ENCODE measurements at regions of chrX and their contacts with region 1.

Region 1: GRCh38 chrX:47078129-47079043 is at the start of gene RGN:
- DNase-seq: peak; percentile 58 to 69
- H3K4me3 ChIP-seq: peak within 1 kb of the TSS; percentile 48
- H3K4me3 Mint-ChIP-seq: peak within 1 kb of the TSS; percentile 69
- H3K27ac Mint-ChIP-seq: peak within 1 kb of the TSS; percentile 22
- H3K4me1 ChIP-seq: peaks cover 24% of the 10 kb centered on the region
- H3K4me1 Mint-ChIP-seq: peaks cover 7% of the 10 kb centered on the region
- H3K27me3 ChIP-seq: no peaks in the 10 kb centered on the region
- H3K27me3 Mint-ChIP-seq: no peaks in the 10 kb centered on the region
- CTCF ChIP-seq: no peak
- total RNA-seq, gene RGN: 32.9 and 36.2 TPM in 2 replicates

Region 2: DNA sequence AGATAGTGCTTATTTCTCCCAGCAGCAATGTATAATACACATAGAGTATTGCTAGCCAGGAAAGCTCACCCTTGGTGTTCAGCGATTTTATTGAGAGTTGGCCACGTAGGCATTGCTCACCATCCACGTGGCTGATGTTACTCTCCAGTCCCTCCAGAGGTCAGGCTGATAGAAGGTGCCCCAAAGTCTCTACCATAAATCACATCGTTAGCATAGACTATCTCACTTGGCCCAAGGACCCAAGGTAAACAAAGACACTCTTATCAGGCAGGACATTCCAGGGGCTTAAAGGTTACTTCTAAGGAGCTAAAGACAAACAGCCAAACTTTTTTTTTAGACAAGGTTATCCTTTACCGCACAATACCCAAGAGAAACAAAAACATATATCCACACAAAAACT is 30.4 kb before region 1 on chrX:
- CTCF ChIA-PET with region 1: no interaction called
- POLR2A ChIA-PET with region 1: interaction called, 4 read pairs
- intact Hi-C with region 1: loop called (anchors 1 kb)
- DNase-seq: peak; percentile 74 to 82
- H3K4me3 ChIP-seq: no peak overlapping the region
- H3K4me3 Mint-ChIP-seq: peak overlapping the region; percentile 43
- H3K27ac Mint-ChIP-seq: no peak overlapping the region
- H3K4me1 ChIP-seq: peaks cover 11% of the 10 kb centered on the region
- H3K4me1 Mint-ChIP-seq: peaks cover 8% of the 10 kb centered on the region
- H3K27me3 ChIP-seq: no peaks in the 10 kb centered on the region
- H3K27me3 Mint-ChIP-seq: no peaks in the 10 kb centered on the region
- CTCF ChIP-seq: peak in 1 of 2 experiments; percentile 33

Region 3: DNA sequence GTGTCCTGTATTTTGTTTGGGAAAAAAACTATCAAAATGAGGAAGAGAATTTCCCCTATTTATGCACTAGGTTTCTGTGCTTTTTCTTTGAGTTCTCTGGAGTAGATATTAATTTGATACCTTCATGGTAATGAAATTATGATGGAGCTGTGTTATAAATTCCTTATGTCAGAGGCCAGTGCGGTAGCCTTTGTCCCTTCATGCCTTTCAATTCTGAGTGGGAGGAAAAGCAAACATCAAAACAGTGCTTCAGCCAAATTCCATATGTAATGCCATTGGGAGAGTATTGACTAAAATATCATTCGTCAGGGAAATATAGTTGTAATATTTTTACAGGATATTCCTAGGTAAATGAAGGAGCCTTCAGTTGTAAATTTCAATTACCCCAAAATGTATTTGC is 17.7 kb before region 1 on chrX:
- CTCF ChIA-PET with region 1: interaction called, 3 read pairs
- POLR2A ChIA-PET with region 1: interaction called, 3 read pairs
- intact Hi-C with region 1: loop called (anchors 2 kb)
- DNase-seq: no peak
- H3K4me3 ChIP-seq: no peak overlapping the region
- H3K4me3 Mint-ChIP-seq: peak overlapping the region; percentile 42
- H3K27ac Mint-ChIP-seq: no peak overlapping the region
- H3K4me1 ChIP-seq: peaks cover 50% of the 10 kb centered on the region
- H3K4me1 Mint-ChIP-seq: peaks cover 26% of the 10 kb centered on the region
- H3K27me3 ChIP-seq: no peaks in the 10 kb centered on the region
- H3K27me3 Mint-ChIP-seq: no peaks in the 10 kb centered on the region
- CTCF ChIP-seq: no peak

Measured in Caco-2 (cell line).